Endothelial cell of umbilical vein (primary cell): ENCODE measurements at regions of chr6 and their contacts with region 1.

Region 1: DNA sequence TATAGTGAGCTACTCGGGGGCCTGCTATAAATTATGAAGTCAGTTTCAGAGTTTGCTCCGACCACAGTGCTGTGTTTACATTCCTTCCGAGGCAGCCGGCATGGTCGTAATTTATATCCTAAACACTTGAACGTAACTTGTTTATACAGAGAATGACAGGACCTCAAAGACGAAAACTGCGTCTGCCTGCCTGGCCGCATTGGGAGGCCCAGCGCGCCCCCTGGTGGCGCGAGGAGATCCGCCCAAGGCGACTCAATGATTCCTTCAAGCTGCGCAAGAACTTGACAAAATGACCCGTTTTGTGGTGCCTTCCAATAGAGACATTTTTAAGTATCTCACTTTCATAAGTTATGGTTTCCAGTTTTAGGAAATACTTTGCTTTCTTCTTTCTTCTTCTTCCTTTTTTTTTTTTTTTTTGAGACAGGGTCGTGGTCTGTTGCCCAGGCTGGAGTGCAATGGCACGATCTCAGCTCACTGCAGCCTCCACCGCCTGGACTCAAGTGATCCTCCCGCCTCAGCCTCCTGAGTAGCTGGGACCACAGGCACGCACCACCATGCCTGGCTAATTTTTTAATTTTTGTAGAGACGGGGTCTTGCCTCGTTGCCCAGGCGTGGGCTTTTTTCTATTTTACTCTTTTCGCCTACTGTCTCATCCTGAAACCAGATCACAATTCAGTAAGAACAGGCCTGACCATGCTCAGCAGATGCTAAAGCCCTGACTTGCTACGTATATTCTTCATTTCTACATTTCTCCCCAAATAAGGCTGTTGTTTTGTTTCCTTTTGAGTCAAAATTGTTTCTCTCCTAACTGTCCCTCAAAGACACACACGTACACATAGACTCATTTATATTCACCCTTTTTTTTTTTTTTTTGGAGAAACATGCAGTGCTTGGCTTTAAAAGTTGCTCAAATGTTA is 7.8 kb downstream of the FOXF2 start:
- DNase-seq: peak; percentile 68
- H3K4me3 ChIP-seq: no peak overlapping the region
- H3K27ac ChIP-seq: no peak overlapping the region
- H3K4me1 ChIP-seq: no peaks in the 10 kb centered on the region
- H3K27me3 ChIP-seq: peaks cover 41 to 46% of the 10 kb centered on the region in 2 experiments
- CTCF ChIP-seq: peak; percentile 97 to 99
- POLR2A ChIP-seq: no peak

Region 2: DNA sequence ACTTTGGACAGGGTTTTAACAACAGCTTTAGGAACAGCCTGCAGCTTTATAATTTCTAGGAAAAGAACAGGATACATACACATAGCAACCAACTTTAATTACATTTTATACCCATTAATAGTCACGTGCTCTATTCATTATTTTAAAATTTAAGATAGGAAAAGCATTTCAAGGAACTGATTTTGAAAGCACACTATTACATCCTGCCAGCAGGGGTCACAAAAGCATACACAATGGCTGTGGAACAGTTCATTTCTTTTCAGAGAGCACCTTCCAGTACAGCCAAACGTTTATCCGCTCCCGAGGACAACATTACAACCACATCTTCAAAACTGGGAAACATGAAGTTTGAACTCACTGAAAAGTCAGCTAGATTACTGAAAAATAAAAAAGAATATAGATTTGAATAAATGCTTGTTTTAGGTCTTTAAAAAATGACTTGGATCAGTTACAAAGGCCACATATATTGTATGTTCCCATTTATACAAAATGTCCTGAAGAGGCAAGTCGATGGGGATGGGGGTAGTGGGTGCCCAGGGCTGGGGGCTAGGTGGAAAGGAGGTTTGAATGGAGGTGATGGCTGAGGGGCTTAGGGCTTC is 599.6 kb before region 1 on chr6:
- CTCF ChIA-PET with region 1: interaction called, 18 read pairs
- POLR2A ChIA-PET with region 1: no interaction called
- dilution Hi-C with region 1: no loop called
- intact Hi-C with region 1: loop called (anchors 1 kb)
- DNase-seq: peak; percentile 65
- H3K4me3 ChIP-seq: no peak overlapping the region
- H3K27ac ChIP-seq: no peak overlapping the region
- H3K4me1 ChIP-seq: no peaks in the 10 kb centered on the region
- H3K27me3 ChIP-seq: peaks cover 3 to 16% of the 10 kb centered on the region in 2 experiments
- CTCF ChIP-seq: peak; percentile 55 to 61
- POLR2A ChIP-seq: no peak

Region 3: GRCh38 chr6:1424306-1424928 is 27.2 kb after region 1 on chr6:
- CTCF ChIA-PET with region 1: interaction called, 10 read pairs
- POLR2A ChIA-PET with region 1: no interaction called
- dilution Hi-C with region 1: no loop called
- intact Hi-C with region 1: no loop called
- DNase-seq: peak; percentile 45
- H3K4me3 ChIP-seq: no peak overlapping the region
- H3K27ac ChIP-seq: no peak overlapping the region
- H3K4me1 ChIP-seq: no peaks in the 10 kb centered on the region
- H3K27me3 ChIP-seq: no peaks in the 10 kb centered on the region
- CTCF ChIP-seq: peak; percentile 47 to 71
- POLR2A ChIP-seq: no peak

Region 4: DNA sequence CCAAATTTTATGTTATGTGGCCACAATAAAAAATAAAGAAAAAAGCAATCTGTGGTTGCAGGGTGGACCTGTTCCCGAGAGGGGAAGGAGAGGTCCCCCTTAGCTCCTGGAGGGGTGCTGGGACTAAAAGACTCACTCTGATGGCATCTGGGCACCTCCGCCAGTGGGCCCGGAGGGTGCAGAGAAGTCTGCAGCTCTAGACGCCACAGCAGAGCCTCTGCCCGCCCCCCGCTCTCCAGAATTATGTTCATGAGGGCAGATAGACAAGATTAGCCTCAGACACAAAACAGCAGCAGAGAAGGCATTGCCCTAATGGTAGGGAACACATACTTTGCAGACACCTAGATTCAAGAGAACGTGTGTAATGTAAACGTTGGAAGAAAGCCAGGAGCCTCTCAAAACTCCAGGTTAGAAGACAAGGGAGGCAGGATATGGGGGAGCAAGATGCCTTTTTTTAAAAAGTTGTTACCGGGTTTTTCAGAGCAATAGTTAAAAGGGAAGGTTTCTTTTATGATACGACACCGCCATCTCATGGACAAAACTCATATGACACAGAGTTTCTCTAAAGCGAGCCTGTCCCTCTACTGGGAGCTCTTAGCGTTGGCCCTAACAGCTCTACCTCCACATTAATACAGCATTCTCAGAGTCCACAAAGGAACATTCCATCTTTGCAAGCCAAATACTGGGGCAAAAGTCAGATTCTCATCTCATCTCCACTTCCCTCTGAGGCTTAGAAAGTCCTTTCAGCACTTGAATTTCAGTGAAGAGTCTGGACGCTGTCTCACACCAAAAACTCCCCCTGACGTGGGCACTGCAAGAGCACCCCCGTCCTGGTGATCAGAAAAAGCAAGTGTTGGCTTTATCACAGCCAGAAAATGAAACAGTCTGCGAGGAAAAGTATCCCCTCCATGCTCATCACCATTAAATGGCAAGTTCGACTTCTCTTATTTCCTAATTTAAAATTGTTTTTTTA is 39.4 kb after region 1 on chr6:
- CTCF ChIA-PET with region 1: interaction called, 19 read pairs
- POLR2A ChIA-PET with region 1: no interaction called
- dilution Hi-C with region 1: no loop called
- intact Hi-C with region 1: loop called (anchors 2 kb)
- DNase-seq: peak; percentile 70
- H3K4me3 ChIP-seq: no peak overlapping the region
- H3K27ac ChIP-seq: no peak overlapping the region
- H3K4me1 ChIP-seq: no peaks in the 10 kb centered on the region
- H3K27me3 ChIP-seq: no peaks in the 10 kb centered on the region
- CTCF ChIP-seq: peak; percentile 56 to 67
- POLR2A ChIP-seq: no peak